ENCODE measurements at regions of chr9 and their contacts with region 1.

Region 1: GRCh38 chr9:131692612-131693562 is 47.0 kb downstream of the RAPGEF1 start:
- DNase-seq: no peak
- ATAC-seq: no peak
- H3K4me3 ChIP-seq: no peak overlapping the region
- H3K27ac ChIP-seq: no peak overlapping the region
- H3K4me1 ChIP-seq: no peaks in the 10 kb centered on the region
- H3K27me3 ChIP-seq: no peaks in the 10 kb centered on the region
- CTCF ChIP-seq: no peak

Region 2: DNA sequence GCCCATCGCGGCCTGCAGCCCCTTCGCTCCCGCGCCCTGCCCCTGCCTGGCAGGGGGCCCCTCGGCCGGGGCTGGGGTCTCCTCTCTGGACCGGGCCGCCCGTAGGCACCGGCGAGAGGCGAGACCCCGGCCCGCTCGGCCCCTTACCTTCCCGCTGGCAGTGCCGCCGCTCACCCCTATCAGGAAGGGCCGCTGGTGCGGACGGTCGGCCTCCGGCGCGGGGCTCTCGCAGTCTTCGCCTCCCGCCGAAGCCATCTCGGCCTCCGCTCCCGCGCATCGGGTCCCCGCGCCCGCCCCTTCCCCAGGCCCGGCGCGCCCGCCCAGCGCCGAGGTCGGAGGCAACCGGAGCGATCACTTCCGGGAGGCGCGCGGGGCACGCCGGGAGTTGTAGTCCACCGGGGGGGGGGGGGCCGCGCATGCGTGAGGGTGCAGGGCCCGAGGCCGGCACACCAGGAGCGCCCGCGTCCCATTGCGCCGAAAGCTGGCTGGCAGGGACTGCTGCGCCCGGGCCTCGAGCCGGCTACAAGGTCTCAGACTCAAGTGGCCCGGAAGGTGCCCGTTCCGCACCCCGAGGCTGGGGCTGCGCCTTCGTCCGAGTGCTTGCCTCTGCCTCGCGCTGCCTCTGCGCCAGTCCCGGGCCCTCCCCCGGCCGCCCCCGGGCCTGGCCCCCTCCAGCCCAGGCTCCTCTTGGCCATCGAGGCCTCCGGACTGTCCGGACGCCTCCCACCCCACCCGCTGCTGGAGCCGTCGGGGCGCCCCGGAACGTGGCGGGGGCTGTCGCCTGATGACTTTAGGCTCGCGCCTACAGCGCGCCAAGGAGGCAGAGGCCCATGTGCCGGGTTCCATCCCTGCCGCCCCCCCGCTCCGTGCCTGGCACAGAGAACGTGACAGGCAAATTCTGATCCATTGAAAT is 161.7 kb before region 1 on chr9 and contains the start of gene UCK1:
- CTCF ChIA-PET with region 1: no interaction called
- POLR2A ChIA-PET with region 1: interaction called, 32 read pairs
- intact Hi-C with region 1: no loop called
- DNase-seq: peak; percentile 64
- ATAC-seq: peak; percentile 87
- H3K4me3 ChIP-seq: peak within 1 kb of the TSS; percentile 76
- H3K27ac ChIP-seq: no peak within 1 kb of the TSS
- H3K4me1 ChIP-seq: peaks cover 7% of the 10 kb centered on the region; the same call in 1 of the 2 replicates
- H3K27me3 ChIP-seq: no peaks in the 10 kb centered on the region
- CTCF ChIP-seq: no peak
- total RNA-seq, gene UCK1: 28.2 and 35.1 TPM in 2 replicates